GM12878 (cell line): ENCODE measurements at regions of chrX and their contacts with region 1.

Region 1: DNA sequence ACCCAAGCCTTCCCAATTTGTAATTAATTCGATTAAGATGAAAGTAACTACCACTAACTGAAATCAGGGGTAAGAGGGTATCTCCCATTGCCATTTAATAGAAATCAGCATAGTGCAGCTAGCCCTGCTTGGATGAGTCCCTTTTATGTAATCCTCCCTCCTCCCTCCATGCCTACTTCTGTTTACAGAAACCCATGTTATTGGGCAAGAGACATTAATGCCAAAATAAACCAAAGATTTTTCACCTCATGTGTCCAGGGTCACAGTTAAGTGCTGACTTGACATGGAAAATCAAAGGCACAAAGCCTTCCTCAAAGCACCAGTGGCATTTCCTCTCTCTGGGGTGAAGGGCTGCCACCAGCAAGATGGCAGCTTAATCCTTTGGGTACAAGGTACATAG is 50.8 kb downstream of the ZC4H2 start:
- DNase-seq: no peak
- ATAC-seq: no peak
- H3K4me3 ChIP-seq: no peak overlapping the region
- H3K27ac ChIP-seq: no peak overlapping the region
- H3K4me1 ChIP-seq: no peaks in the 10 kb centered on the region
- H3K27me3 ChIP-seq: no peaks in the 10 kb centered on the region
- CTCF ChIP-seq: no peak
- EP300 ChIP-seq: no peak
- POLR2A ChIP-seq: no peak
- RAD21 ChIP-seq: no peak

Region 2: GRCh38 chrX:63250253-63250868 is 1675.1 kb before region 1 on chrX:
- CTCF ChIA-PET with region 1: no interaction called
- POLR2A ChIA-PET with region 1: no interaction called
- RAD21 ChIA-PET with region 1: no interaction called
- SMC1A ChIA-PET with region 1: no interaction called
- in situ Hi-C with region 1: no loop called
- intact Hi-C with region 1: no loop called
- DNase-seq: peak; percentile 60
- ATAC-seq: peak; percentile 100
- H3K4me3 ChIP-seq: no peak overlapping the region
- H3K27ac ChIP-seq: no peak overlapping the region
- H3K4me1 ChIP-seq: no peaks in the 10 kb centered on the region
- H3K27me3 ChIP-seq: no peaks in the 10 kb centered on the region
- CTCF ChIP-seq: peak; percentile 81 to 94 (median 90)
- EP300 ChIP-seq: no peak; a peak in 1 of 4 replicates
- POLR2A ChIP-seq: no peak
- RAD21 ChIP-seq: peak; percentile 85

Region 3: DNA sequence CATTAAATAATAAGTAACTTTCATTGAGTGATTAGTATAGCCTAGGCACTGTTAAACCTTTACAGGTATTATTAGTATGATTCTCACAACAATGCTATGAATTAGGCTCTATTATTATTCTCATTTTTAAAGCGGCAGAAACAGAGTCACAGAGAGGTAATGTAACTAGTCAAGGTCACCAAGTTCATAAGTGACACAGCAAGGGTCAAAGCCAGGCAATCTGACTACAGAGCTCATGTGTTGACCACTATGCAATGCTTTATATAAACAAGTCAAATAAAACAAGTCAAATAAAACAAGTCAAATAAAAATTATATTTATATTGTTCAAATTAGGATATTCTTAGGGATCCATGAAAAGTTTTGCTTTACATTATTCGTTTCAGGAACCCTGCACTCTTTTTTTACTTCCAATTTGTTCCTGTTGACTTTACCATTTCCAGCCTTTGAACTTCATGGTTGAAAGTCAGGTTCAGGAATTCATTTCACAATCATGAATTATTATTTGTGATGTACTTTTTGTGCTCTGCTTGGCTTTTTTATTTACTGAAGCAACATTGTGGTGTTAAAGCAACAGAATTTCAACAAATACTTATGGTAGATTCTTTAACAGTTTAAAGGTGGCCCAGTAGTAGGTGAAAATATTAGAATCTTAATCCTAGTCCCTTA is 68.8 kb after region 1 on chrX:
- CTCF ChIA-PET with region 1: no interaction called
- POLR2A ChIA-PET with region 1: no interaction called
- RAD21 ChIA-PET with region 1: no interaction called
- SMC1A ChIA-PET with region 1: no interaction called
- in situ Hi-C with region 1: loop called (anchors 10 kb)
- intact Hi-C with region 1: no loop called
- DNase-seq: no peak
- ATAC-seq: no peak
- H3K4me3 ChIP-seq: no peak overlapping the region
- H3K27ac ChIP-seq: no peak overlapping the region
- H3K4me1 ChIP-seq: no peaks in the 10 kb centered on the region
- H3K27me3 ChIP-seq: no peaks in the 10 kb centered on the region
- CTCF ChIP-seq: no peak
- EP300 ChIP-seq: no peak
- POLR2A ChIP-seq: no peak
- RAD21 ChIP-seq: no peak